AG04449 (cell line): ENCODE measurements at regions of chr3 and their contacts with region 1.

Region 1: DNA sequence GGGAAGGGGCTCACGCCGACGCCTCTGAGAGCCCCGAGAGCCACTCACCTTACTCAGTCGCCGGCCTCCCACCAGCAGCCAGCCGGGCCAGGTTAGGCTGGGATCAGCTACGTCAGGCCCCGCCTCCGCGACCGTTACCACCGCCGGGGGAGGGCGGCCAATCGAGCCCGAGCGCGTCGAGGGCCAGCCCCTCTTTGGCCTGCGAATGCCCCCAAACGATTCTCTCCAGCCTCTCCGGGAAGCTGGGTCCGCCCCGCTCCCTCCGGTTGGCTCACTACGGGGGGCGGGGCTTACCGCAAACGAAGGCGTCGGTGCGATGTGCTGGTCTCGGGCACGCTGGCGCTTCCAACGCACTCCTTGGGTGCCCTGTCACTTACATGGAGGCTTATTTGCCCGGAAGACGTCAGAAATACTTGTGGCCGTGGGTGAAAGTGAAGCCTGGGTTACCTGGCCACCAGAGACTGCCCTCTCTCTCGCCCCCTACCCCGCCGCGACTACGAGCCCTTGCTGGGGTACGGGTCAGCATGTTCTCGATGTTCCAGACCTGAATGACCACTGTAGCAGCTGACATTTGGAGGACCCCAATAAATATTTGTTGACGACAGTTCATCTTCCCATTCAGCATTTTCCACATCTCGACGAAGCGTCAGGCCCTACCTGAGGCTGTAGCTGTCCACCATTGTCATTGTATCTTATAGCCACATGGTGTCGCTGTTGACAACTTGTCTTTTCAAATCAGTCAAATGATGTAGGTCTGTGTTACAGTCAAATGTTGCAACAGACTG is at the start of gene CEP70:
- DNase-seq: peak; percentile 65
- H3K4me3 ChIP-seq: peak within 1 kb of the TSS; percentile 84
- CTCF ChIP-seq: peak; percentile 68

Region 2: DNA sequence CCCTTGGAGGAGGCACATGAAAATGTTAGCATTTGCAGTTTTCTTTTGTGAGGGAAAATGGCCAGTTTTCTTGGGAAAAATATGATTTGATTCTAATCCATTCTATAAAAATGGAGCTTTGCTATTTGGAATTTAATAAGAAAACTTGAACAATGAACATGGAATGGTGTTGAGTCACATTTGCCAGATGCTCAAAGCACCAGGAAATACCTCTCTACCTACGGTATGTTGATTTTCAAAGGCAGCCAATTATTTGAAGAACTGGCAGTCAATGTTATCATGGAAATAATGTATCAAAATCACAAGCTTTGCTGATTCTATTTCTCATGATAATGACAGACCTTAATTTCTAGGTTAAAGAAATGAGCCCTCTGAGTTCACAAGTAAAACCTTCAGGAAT is 279.6 kb before region 1 on chr3:
- CTCF ChIA-PET with region 1: no interaction called
- POLR2A ChIA-PET with region 1: no interaction called
- DNase-seq: no peak
- H3K4me3 ChIP-seq: no peak overlapping the region
- CTCF ChIP-seq: no peak

Region 3: DNA sequence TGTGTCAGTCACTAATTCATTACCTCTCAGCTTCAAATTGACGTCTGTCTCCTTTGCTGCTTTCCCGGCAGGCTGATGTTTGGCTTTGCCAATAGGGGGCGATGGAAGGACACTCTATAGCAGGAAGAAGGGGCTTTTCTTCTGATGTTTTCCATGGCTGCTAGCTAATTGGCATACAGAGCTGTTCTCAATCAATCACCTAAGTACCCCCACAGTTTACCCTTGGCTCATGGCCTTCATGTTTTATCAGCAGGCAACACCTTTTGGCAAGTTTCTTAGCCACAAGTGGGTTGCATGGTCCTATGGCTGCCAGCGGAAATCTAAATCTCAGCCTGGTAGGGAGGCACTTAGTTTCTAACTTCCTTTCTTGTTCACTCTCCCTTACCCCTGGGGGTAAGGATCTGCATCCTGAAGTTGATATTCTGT is 114.9 kb before region 1 on chr3:
- CTCF ChIA-PET with region 1: interaction called, 13 read pairs
- POLR2A ChIA-PET with region 1: no interaction called
- DNase-seq: no peak
- H3K4me3 ChIP-seq: no peak overlapping the region
- CTCF ChIP-seq: peak; percentile 90

Region 4: GRCh38 chr3:138578141-138578540 is 16.2 kb before region 1 on chr3:
- CTCF ChIA-PET with region 1: interaction called, 32 read pairs
- POLR2A ChIA-PET with region 1: no interaction called
- DNase-seq: no peak
- H3K4me3 ChIP-seq: no peak overlapping the region; the same call in 1 of the 2 replicates
- CTCF ChIP-seq: no peak

Region 5: DNA sequence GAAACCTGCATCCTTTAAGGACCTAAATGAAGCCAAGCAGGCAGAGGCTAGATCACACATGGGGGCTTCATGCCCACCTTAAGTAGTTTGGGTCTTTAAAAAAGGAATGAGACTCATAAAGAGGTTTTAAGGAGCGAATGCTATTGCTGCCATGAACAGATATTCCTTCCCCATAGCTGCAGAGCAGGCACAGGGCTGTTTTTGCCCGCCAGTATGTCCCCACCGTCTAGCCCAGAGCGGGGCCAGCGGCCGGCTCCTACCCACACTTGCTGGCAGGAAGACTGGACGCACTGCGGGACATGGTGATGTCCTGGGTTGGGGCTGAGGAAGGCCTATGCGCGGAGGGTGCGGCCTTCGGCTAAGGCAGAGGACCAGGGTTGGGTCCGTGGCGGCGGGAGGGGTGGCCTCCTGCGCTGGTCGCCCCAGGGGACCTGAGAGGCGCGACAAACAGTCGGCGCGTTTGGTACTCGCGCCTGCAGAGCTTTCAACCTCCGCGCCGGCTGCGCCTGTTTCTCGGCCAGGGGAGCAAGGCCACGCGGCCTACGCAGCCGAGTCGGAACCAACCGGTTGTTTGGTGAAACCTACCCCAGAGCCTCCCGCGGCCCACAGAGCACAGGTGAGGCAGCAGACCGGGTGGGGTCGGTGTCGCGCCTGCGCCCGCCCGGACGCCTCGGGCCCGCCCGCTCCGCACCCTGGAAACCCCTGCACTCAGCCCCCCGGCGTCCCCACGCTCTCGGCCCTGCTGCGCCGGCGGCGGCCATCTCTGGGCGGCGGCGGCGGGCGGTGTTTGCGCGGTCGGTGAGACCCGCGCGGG is 14.2 kb after region 1 on chr3 and contains the start of gene FAIM:
- CTCF ChIA-PET with region 1: interaction called, 18 read pairs
- POLR2A ChIA-PET with region 1: no interaction called
- DNase-seq: no peak
- H3K4me3 ChIP-seq: peak within 1 kb of the TSS; percentile 66
- CTCF ChIP-seq: no peak

Region 6: DNA sequence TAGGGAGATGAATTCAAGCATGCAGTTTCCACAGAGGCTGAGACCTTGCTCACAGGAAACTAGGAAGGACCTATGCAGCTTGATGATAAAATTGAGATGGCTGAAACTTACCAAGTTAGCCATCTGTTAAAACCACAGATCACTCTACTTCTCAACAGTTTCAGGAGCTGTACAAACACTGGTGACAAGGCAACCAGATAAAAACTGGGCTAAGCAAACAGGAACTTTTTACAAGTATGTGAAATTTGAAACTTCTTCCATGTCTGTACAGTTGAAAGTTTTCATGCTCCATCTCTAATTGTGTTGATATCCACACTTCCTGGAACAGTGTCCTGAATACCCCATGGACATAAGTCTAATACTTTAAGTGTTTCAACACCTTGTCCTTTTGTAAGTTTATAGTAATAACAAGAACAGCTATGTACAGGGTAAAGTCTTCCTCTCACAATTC is 92.5 kb after region 1 on chr3:
- CTCF ChIA-PET with region 1: interaction called, 15 read pairs
- POLR2A ChIA-PET with region 1: no interaction called
- DNase-seq: peak; percentile 85
- H3K4me3 ChIP-seq: no peak overlapping the region
- CTCF ChIP-seq: no peak

Region 7: DNA sequence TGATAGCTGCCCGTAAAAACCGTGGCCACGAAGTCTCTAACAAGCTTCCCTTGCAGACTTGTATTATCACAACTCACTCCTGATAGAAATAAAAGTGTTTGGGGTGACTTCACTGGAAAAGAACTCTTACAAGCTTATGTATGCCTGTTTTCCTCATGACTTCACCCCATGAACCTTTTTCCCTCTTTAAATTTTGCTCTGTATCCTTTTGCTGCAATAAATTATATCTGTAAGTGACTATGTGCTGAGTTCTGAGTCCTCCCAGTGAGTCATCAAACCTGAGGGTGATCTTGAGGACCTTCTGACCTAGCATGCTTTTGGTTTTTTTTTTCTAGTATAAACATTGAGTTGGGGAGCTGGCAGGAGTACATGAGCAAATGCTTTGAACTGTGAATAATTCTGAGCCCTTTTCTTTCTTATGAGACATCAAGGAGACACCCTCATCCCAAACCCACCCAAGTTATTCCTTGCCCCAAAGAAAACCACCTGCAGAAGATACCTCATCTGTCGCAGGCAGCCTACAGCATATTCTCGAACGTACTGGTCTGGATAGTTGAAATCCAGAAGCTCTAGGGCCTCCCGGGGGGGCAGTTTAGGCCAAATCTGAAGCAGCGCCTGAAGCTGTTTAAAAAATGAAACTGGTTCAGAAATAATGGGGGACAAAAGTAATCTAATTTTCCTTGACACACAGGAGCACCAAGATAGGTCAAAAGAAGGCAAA is 100.1 kb after region 1 on chr3:
- CTCF ChIA-PET with region 1: interaction called, 24 read pairs
- POLR2A ChIA-PET with region 1: interaction called, 4 read pairs
- DNase-seq: peak; percentile 95
- H3K4me3 ChIP-seq: no peak overlapping the region
- CTCF ChIP-seq: no peak

Region 8: DNA sequence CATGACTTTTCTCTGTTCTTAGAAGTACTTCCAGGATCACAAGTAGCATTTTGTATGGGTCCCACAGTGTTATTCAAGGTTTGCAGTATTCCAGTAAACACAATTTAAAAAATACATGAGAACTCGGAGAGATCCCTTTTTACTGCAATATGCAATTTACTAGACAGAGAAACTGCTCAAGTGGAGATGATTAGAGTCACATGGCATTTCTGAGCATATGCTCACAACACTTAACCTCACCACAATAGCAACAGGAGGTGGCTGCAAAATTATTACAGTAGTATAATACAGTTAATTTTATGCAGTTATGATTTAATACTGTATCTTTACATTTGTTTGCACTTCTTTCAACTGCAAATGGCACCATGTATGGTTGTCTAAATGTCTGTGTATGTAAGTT is 152.9 kb after region 1 on chr3:
- CTCF ChIA-PET with region 1: no interaction called
- POLR2A ChIA-PET with region 1: no interaction called
- DNase-seq: no peak
- H3K4me3 ChIP-seq: no peak overlapping the region
- CTCF ChIP-seq: no peak

Region 9: DNA sequence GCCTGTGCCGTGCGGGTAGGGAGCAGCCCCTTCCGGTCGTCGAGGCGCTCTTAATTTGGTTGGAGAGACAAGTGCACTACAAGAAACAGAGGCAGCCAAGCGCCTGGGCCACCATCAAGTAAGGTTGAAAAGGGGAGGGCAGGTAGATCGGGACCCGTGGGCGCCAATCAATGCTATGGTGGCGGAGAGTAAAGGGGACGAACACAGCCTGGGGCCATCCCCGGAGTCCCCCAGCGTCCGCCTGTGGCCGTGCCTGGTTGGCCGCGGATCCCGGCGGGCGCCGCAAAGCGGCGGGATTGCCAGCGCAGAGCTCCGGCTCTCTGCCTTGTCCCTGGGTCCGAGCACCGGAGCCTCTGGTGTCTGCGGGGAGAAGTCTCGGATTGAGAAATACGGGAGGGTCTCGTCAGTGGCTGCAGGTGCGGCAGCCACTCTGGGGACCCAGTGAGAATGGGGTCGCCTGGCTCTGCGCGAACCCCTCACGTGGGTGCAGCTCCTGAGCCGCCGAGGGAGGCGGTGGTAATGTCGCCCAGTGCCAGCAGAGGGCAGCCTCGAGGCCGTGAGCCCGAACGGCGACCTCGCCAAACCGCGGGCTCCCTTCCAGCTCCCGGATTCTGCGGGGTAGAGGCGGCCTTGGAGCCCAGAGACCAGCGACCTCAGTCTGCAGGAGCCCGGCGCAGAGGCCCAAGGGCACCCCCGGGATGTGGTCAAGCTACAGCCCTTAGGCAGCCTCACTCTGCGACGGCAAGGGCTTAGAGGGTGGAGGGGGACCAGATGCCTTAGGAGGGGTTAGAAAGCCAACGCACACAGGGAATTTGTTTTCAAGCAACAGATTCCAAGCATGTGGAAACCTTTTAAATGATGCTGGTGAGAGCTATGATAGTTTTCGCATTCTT is 341.8 kb after region 1 on chr3:
- CTCF ChIA-PET with region 1: interaction called, 27 read pairs
- POLR2A ChIA-PET with region 1: no interaction called
- DNase-seq: no peak
- H3K4me3 ChIP-seq: peak overlapping the region; percentile 60
- CTCF ChIP-seq: peak; percentile 98